Right ventricle myocardium inferior (tissue), 1 donor: ENCODE measurements at regions of chr17 and their contacts with region 1.

Region 1: DNA sequence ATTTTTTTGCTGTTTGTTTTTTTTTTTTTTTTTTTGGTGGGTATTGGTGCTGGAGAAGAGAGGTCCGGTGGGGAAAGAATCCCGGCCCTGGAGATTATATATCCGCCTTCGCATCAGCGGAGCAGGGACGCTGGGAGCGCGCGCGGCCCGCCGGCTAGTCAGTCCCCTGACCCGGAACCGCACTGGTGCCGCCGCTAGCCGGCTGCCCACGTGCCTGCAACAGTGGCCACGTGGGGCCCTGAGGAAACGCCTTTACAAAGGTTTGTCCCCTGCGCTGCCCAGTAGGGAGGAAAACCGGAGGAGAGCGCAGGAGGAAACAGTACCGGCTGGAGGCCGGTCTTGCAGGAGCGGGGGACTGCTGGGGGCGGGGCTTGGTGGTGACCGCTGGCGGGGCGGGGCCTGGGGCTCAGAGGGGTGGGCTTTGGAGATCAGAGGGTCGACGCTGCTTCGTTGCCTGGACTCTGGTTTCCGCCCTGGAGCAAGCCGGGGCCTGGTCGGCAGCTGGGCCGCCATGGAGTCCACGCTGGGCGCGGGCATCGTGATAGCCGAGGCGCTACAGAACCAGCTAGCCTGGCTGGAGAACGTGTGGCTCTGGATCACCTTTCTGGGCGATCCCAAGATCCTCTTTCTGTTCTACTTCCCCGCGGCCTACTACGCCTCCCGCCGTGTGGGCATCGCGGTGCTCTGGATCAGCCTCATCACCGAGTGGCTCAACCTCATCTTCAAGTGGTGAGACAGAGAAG is at the start of gene G6PC3:
- DNase-seq: peak; percentile 96
- ATAC-seq: peak; percentile 95
- total RNA-seq, gene G6PC3: 30.4 TPM

Region 2: DNA sequence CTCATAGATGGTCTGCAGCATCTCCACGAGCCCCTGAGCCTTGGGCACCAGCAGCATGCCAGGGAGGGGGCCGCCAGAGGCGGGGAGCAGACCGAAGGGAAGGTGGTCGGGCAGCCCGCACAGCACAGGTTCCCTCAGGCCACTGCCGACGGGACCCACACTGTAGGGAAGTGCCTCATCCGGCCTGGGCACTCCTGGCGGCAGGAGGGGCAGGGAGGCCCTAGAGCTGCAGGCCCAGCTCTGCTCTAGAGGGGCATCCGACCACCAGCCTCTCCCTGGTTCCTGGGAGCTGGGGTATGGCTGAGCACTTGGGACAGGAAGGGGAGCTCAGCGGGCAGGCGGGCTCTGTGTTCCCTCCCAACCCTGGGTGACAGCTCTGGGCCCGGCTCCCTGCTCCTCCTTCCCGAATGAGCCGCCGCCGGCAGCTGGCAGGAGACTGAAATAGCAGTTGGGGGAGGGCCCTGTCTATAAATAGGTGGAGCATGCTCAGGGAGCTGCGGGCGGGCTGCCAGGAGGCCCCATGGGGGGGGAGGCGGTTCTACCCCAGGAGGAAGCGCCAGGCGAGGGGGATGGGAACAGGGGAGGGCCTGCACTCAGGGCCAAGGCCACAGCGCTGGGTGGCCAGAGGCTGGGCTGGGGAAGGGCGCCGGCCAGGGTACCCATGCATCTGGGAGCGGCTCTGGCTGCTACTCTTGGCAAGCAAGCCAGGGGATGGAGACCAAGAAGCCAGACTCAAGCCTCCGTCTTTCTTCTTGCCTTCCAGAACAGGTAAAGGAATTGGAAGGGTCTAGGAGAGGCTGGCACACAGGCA is 40.4 kb after region 1 on chr17:
- intact Hi-C with region 1: loop called (anchors 5 kb)
- DNase-seq: peak; percentile 99
- ATAC-seq: peak; percentile 86